Natural killer cell (primary cell): ENCODE measurements at regions of chr4 and their contacts with region 1.

Region 1: DNA sequence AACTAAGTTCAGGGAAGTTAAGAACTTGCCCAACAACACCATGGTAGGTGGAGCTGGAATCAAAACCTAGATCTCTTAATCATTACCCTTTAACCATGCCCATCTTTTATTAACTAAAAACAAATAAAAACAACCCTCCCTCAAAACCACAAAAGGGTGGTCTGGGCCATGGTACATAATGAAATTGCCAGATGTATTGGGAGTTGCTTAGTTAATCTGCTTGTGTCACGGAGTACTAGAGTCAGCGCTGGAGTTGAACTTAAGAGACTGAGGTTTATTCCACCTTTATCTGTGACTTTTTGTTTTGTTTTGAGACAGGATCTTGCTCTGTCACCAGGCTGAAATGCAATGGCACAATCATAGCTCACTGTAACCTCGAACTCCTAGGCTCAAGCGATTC is 13.3 kb downstream of the LRRC66 start:
- DNase-seq: no peak
- ATAC-seq: no peak
- H3K4me3 ChIP-seq: no peak overlapping the region
- H3K4me3 Mint-ChIP-seq: no peak overlapping the region
- H3K27ac ChIP-seq: no peak overlapping the region
- H3K27ac Mint-ChIP-seq: no peak overlapping the region
- H3K4me1 ChIP-seq: no peaks in the 10 kb centered on the region
- H3K4me1 Mint-ChIP-seq: no peaks in the 10 kb centered on the region
- H3K27me3 ChIP-seq: no peaks in the 10 kb centered on the region
- H3K27me3 Mint-ChIP-seq: no peaks in the 10 kb centered on the region
- CTCF ChIP-seq: no peak

Region 2: GRCh38 chr4:51878431-51878830 is 128.5 kb before region 1 on chr4:
- intact Hi-C with region 1: loop called (anchors 5 kb)
- DNase-seq: no peak
- ATAC-seq: no peak
- H3K4me3 ChIP-seq: no peak overlapping the region
- H3K4me3 Mint-ChIP-seq: no peak overlapping the region
- H3K27ac ChIP-seq: no peak overlapping the region
- H3K27ac Mint-ChIP-seq: no peak overlapping the region
- H3K4me1 ChIP-seq: no peaks in the 10 kb centered on the region
- H3K4me1 Mint-ChIP-seq: peaks cover 23% of the 10 kb centered on the region in 2 donors
- H3K27me3 ChIP-seq: no peaks in the 10 kb centered on the region
- H3K27me3 Mint-ChIP-seq: no peaks in the 10 kb centered on the region
- CTCF ChIP-seq: no peak

Region 3: GRCh38 chr4:52019936-52020657 is 13.2 kb after region 1 on chr4 and contains the start of gene LRRC66:
- intact Hi-C with region 1: no loop called
- DNase-seq: no peak
- ATAC-seq: no peak
- H3K4me3 ChIP-seq: no peak within 1 kb of the TSS
- H3K4me3 Mint-ChIP-seq: no peak within 1 kb of the TSS
- H3K27ac ChIP-seq: no peak within 1 kb of the TSS
- H3K27ac Mint-ChIP-seq: no peak within 1 kb of the TSS
- H3K4me1 ChIP-seq: no peaks in the 10 kb centered on the region
- H3K4me1 Mint-ChIP-seq: no peaks in the 10 kb centered on the region
- H3K27me3 ChIP-seq: no peaks in the 10 kb centered on the region
- H3K27me3 Mint-ChIP-seq: no peaks in the 10 kb centered on the region
- CTCF ChIP-seq: no peak
- total RNA-seq, gene LRRC66: not detected

Region 4: DNA sequence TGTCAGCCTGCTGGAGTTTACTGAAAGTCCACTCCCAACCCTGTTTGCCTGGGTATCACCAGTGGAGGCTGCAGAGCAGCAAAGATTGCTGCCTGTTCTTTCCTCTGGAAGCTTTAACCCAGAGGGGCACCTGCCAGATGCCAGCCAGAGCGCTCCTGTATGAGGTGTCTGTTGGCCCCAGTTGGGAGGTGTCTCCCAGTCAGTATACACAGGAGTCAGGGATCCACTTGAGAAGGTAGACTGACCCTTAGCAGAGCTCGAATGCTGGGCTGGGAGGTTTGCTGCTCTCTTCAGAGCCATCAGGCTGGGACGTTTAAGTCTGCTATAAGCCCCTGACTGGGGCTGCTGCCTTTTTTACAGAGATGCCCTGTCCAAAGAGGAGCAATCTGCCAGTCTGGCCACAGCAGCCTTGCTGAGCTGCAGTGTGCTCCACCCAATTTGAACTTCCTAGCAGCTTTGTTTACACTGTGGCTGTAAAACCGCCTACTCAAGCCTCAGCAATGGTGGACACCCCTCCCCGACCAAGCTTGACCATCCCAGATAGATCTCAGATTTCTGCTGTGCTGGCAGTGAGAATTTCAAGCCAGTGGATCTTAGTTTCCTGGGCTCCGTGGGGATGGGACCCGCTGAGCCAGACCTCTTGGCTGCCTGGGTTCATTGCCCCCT is 84.8 kb after region 1 on chr4:
- intact Hi-C with region 1: no loop called
- DNase-seq: no peak
- ATAC-seq: no peak
- H3K4me3 ChIP-seq: no peak overlapping the region
- H3K4me3 Mint-ChIP-seq: no peak overlapping the region
- H3K27ac ChIP-seq: no peak overlapping the region
- H3K27ac Mint-ChIP-seq: no peak overlapping the region
- H3K4me1 ChIP-seq: no peaks in the 10 kb centered on the region
- H3K4me1 Mint-ChIP-seq: no peaks in the 10 kb centered on the region
- H3K27me3 ChIP-seq: no peaks in the 10 kb centered on the region
- H3K27me3 Mint-ChIP-seq: no peaks in the 10 kb centered on the region
- CTCF ChIP-seq: no peak

Region 5: DNA sequence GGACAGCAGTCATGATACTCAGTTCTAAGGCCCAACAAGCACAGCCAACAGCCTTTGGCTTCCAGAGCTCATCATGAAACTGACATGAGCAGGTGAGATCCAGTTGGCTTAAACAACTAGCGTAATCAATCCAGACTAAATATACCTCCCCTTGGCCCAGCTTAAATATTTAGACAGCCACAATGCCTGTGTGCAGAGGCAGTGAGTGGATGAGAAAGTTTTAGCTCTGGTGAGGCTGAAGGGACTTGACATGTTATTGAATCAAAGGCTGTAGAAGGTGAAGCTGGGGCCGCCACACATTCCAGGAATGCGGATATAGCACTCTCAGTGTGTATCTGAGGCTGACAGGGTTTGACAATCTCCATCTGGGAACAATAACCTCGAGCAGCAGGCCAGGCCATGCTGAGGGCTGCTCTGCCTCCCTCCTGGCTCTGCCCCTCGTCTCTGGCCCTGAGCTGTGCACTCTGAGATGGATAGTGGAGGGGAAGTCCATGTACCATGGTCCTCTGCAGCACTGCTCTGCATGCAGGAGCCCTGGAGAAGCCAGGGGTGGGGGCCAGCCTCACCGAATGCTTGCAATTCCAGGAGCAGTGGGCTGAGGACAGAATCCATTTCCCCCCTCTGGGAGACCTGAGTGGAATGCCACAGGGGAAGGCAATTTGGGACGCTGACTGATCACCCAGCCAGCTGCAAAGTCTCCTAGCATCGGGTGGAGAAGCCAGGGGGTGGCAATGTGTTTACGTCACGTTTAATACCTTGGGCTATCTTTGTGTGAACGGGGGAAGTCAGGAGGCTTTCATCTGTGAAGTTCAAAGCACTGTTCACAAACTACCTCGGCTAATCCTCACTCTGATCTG is 817.9 kb after region 1 on chr4:
- intact Hi-C with region 1: no loop called
- DNase-seq: peak in 1 of 2 donors; percentile 7
- ATAC-seq: no peak
- H3K4me3 ChIP-seq: no peak overlapping the region
- H3K4me3 Mint-ChIP-seq: no peak overlapping the region
- H3K27ac ChIP-seq: no peak overlapping the region
- H3K27ac Mint-ChIP-seq: no peak overlapping the region
- H3K4me1 ChIP-seq: no peaks in the 10 kb centered on the region
- H3K4me1 Mint-ChIP-seq: no peaks in the 10 kb centered on the region
- H3K27me3 ChIP-seq: no peaks in the 10 kb centered on the region
- H3K27me3 Mint-ChIP-seq: peaks cover 0 to 3% of the 10 kb centered on the region in 2 donors
- CTCF ChIP-seq: no peak